CD4-positive, alpha-beta T cell (primary cell): ENCODE measurements at regions of chr19 and their contacts with region 1.

Region 1: DNA sequence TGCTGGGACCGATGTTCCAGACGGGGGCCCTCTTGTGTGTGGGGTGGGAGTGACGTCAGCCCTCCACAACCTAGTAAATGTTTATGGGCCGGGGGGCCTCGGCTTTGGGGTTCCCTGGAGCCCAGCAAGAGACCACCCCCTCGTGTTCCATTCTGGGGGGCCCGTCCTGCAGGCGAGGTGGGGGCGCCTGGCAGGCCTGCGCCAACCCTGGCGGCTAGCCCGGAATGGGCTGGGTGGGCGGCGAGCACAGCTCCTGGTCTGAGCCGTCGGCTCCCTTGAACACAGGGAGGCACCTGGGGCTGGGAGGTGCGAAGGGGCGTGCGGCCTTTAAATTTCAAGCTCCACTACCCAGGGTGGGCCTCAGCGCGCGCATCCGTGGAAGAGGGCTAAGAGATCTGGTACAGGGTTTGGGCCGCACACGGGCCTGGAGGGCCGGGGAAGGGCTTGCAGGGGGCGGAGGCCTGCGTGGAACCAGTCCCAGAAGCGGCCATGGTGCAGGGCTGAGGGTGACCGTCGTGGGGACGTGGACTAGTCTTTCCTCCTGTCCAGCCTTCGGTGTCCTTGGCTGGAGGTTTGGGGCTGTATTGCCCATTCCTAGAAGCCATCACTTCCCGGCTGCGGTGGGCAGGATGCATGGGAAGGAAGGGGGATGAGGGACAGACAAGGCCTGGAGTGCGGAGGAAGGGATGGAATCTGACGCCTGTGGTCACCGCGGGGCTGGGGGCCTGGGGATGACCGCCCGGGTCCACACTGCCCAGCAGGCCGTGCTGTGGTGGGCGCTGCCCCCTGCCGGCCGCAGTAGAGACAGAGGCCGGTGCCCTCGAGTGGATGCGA is 11.4 kb downstream of the NDUFA11 start:
- DNase-seq: peak in 6 of 14 experiments; percentile 10 to 46 (median 24)
- ATAC-seq: peak; percentile 41
- H3K4me3 ChIP-seq: no peak overlapping the region
- H3K4me3 Mint-ChIP-seq: peak overlapping the region; percentile 7
- H3K27ac ChIP-seq: no peak overlapping the region
- H3K27ac Mint-ChIP-seq: no peak overlapping the region
- H3K4me1 ChIP-seq: peaks cover 10% of the 10 kb centered on the region
- H3K4me1 Mint-ChIP-seq: no peaks in the 10 kb centered on the region
- H3K27me3 ChIP-seq: no peaks in the 10 kb centered on the region
- H3K27me3 Mint-ChIP-seq: peaks cover 12% of the 10 kb centered on the region
- CTCF ChIP-seq: peak; percentile 41

Region 2: GRCh38 chr19:5707576-5708575 is 184.3 kb before region 1 on chr19:
- CTCF ChIA-PET with region 1: no interaction called
- POLR2A ChIA-PET with region 1: no interaction called
- intact Hi-C with region 1: no loop called
- DNase-seq: peak in 1 of 14 experiments; percentile 5
- ATAC-seq: no peak
- H3K4me3 ChIP-seq: no peak overlapping the region
- H3K4me3 Mint-ChIP-seq: no peak overlapping the region
- H3K27ac ChIP-seq: no peak overlapping the region
- H3K27ac Mint-ChIP-seq: no peak overlapping the region
- H3K4me1 ChIP-seq: no peaks in the 10 kb centered on the region
- H3K4me1 Mint-ChIP-seq: no peaks in the 10 kb centered on the region
- H3K27me3 ChIP-seq: no peaks in the 10 kb centered on the region
- H3K27me3 Mint-ChIP-seq: no peaks in the 10 kb centered on the region
- CTCF ChIP-seq: no peak

Region 3: GRCh38 chr19:5913739-5914357 is 21.7 kb after region 1 on chr19 and contains the start of gene CAPS:
- CTCF ChIA-PET with region 1: no interaction called
- POLR2A ChIA-PET with region 1: no interaction called
- intact Hi-C with region 1: loop called in 1 of 2 experiments (anchors 1 kb)
- DNase-seq: no peak
- ATAC-seq: no peak
- H3K4me3 ChIP-seq: no peak within 1 kb of the TSS
- H3K4me3 Mint-ChIP-seq: no peak within 1 kb of the TSS
- H3K27ac ChIP-seq: no peak within 1 kb of the TSS
- H3K27ac Mint-ChIP-seq: peak within 1 kb of the TSS; percentile 47
- H3K4me1 ChIP-seq: no peaks in the 10 kb centered on the region
- H3K4me1 Mint-ChIP-seq: no peaks in the 10 kb centered on the region
- H3K27me3 ChIP-seq: no peaks in the 10 kb centered on the region
- H3K27me3 Mint-ChIP-seq: no peaks in the 10 kb centered on the region
- CTCF ChIP-seq: no peak
- total RNA-seq, gene CAPS: 43.2 to 44.2 TPM

Region 4: GRCh38 chr19:6056801-6057650 is 164.9 kb after region 1 on chr19:
- CTCF ChIA-PET with region 1: no interaction called
- POLR2A ChIA-PET with region 1: no interaction called
- intact Hi-C with region 1: no loop called
- DNase-seq: peak in 5 of 14 experiments; percentile 26 to 80 (median 43)
- ATAC-seq: peak; percentile 38
- H3K4me3 ChIP-seq: no peak overlapping the region
- H3K4me3 Mint-ChIP-seq: no peak overlapping the region
- H3K27ac ChIP-seq: peak overlapping the region in 1 of 2 donors; percentile 38
- H3K27ac Mint-ChIP-seq: peak overlapping the region; percentile 41
- H3K4me1 ChIP-seq: peaks cover 48% of the 10 kb centered on the region
- H3K4me1 Mint-ChIP-seq: peaks cover 32% of the 10 kb centered on the region
- H3K27me3 ChIP-seq: no peaks in the 10 kb centered on the region
- H3K27me3 Mint-ChIP-seq: peaks cover 4% of the 10 kb centered on the region
- CTCF ChIP-seq: no peak